ENCODE measurements at regions of chr1 and their contacts with region 1.

Region 1: DNA sequence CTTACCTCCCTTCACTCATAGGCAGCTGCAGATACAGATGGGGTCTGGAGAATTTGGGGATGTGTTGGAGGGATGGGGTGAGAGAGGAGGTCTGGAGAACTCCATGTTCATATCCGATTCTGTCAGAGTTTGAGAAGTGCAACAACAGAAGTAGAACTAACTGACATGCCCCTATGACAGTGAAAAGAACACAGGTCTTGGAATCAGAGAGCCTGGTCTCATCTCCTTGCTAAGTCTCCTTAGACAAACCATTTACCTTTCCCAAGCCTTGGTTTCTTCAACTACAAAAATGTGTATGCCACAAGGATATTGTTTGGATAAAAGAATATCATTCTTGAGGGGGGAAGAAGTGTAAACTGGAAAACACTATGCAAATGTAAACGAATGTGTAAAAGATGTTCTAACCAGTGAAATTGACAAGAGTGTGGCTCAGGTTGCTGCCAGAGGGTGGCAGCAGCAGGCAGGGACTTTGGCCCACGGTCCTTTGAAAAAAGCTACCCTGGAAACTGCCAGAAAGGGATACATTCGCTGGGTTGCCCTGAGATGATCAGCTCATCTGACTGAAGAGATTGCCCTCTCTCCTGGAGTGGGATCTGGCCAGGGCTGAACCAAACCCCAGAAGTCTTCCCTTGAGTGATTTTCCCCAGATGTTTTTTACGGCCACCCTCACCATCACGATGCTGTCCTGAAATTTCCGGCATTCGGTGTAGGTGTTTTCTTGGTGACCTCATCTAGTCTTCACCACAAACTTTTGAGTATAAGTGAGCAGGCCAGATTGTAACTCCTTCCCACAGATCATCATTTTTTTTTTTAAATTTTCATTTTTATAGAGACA is 17.0 kb upstream of the CD2 start:
- DNase-seq: peak; percentile 53 to 81 (median 77)
- H3K4me3 ChIP-seq: peak overlapping the region; percentile 37
- H3K4me3 Mint-ChIP-seq: peak overlapping the region; percentile 66 to 81 (median 79)
- H3K27ac ChIP-seq: peak overlapping the region; percentile 79
- H3K27ac Mint-ChIP-seq: peak overlapping the region; percentile 99 to 100 (median 100)
- H3K4me1 ChIP-seq: peaks cover 42% of the 10 kb centered on the region
- H3K4me1 Mint-ChIP-seq: peaks cover 43 to 47% (median 47%) of the 10 kb centered on the region in 3 donors
- H3K27me3 ChIP-seq: no peaks in the 10 kb centered on the region
- H3K27me3 Mint-ChIP-seq: peaks cover 0 to 1% of the 10 kb centered on the region in 2 donors

Region 2: GRCh38 chr1:116521186-116521585 is 216.1 kb before region 1 on chr1:
- CTCF ChIA-PET with region 1: no interaction called
- POLR2A ChIA-PET with region 1: no interaction called
- DNase-seq: no peak
- H3K4me3 ChIP-seq: no peak overlapping the region
- H3K4me3 Mint-ChIP-seq: no peak overlapping the region
- H3K27ac ChIP-seq: no peak overlapping the region
- H3K27ac Mint-ChIP-seq: peak overlapping the region in 2 of 8 donors; percentile 11 to 70
- H3K4me1 ChIP-seq: peaks cover 1% of the 10 kb centered on the region
- H3K4me1 Mint-ChIP-seq: peaks cover 14 to 23% (median 22%) of the 10 kb centered on the region in 3 donors
- H3K27me3 ChIP-seq: no peaks in the 10 kb centered on the region
- H3K27me3 Mint-ChIP-seq: no peaks in the 10 kb centered on the region

Region 3: DNA sequence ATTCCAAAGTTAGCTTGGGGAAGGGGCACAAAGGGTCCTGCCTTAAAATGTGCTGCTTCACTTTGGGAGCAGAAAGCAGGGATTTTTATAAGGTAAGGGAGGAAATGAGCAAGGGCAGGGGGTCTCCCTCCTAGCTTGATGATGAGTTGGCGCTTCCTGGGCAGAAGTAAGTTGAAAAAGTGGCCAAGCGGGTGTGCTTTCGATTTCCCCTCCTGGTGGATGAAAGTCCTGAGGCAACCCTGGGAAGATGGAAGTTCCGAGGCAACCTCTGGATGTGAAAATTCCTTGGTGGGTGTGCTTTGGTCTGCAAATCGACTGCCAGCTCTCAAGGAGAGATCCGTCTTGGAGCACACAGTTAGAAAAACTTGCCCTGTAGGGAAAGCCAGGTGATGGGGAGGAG is 24.7 kb before region 1 on chr1:
- CTCF ChIA-PET with region 1: no interaction called
- POLR2A ChIA-PET with region 1: no interaction called
- DNase-seq: no peak
- H3K4me3 ChIP-seq: no peak overlapping the region
- H3K4me3 Mint-ChIP-seq: no peak overlapping the region
- H3K27ac ChIP-seq: no peak overlapping the region
- H3K27ac Mint-ChIP-seq: no peak overlapping the region
- H3K4me1 ChIP-seq: no peaks in the 10 kb centered on the region
- H3K4me1 Mint-ChIP-seq: no peaks in the 10 kb centered on the region
- H3K27me3 ChIP-seq: no peaks in the 10 kb centered on the region
- H3K27me3 Mint-ChIP-seq: peaks cover 5 to 34% of the 10 kb centered on the region in 2 donors

Region 4: DNA sequence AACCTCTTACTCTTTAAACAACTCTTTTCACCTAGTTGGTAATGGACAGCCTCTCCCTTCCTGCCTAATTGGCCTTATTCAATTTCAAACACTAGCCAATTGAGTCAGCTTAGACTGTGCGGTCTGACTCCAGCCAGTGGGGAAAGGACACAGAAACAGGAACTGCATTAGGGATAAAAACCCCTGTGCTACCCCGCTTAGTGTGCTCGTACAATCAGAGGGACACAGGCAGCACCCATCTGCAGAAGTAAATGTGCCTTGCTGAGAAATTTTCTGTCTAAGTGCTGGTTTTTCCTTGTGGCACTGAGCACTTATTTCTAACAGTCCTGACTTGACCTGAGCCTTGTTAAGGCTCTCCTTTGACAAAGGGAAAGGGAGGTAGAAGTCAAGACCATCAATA is 11.0 kb after region 1 on chr1:
- CTCF ChIA-PET with region 1: interaction called, 47 read pairs
- POLR2A ChIA-PET with region 1: interaction called, 12 read pairs
- DNase-seq: no peak
- H3K4me3 ChIP-seq: no peak overlapping the region
- H3K4me3 Mint-ChIP-seq: no peak overlapping the region
- H3K27ac ChIP-seq: no peak overlapping the region
- H3K27ac Mint-ChIP-seq: peak overlapping the region in 1 of 8 donors; percentile 7
- H3K4me1 ChIP-seq: peaks cover 22% of the 10 kb centered on the region
- H3K4me1 Mint-ChIP-seq: peaks cover 20 to 31% (median 30%) of the 10 kb centered on the region in 3 donors
- H3K27me3 ChIP-seq: no peaks in the 10 kb centered on the region
- H3K27me3 Mint-ChIP-seq: no peaks in the 10 kb centered on the region

Region 5: DNA sequence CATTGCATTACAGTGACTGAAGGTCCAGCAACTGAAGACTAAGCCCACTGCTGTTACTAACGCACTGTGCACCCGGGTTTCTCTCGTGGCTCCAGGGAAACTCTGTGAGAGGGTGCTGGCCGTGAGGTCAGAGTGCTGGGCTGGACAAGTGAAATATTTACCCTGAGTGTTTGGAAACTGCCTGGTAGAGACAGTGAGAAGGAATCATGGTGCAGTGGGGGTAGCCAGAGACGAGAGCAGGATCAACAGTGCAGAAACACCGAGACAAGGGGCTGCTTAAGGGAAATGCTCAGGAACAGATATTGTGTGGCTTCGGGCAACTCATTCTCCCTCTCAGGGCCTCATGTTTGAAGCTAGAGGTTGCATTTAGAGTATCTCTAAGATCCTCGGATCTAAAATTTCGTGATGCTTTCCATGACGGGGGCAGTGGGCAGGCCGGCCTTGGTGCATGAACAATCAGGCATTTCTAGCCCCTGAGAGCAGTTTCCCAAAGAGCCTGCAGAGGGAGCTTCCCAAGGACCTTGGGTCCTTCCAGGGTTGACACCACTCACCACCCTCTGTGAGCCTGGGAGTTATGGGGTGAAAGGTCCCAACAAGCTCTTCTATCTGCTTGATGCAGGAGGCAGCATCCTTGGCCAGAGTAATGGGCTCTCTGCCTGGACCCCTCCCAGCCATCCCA is 26.7 kb after region 1 on chr1:
- CTCF ChIA-PET with region 1: interaction called, 169 read pairs
- POLR2A ChIA-PET with region 1: interaction called, 42 read pairs
- DNase-seq: peak in 3 of 5 donors; percentile 31 to 65 (median 39)
- H3K4me3 ChIP-seq: peak overlapping the region; percentile 64
- H3K4me3 Mint-ChIP-seq: peak overlapping the region; percentile 80 to 97 (median 89)
- H3K27ac ChIP-seq: peak overlapping the region; percentile 73
- H3K27ac Mint-ChIP-seq: peak overlapping the region; percentile 98 to 100 (median 98)
- H3K4me1 ChIP-seq: peaks cover 99% of the 10 kb centered on the region
- H3K4me1 Mint-ChIP-seq: peaks cover 94 to 100% (median 99%) of the 10 kb centered on the region in 3 donors
- H3K27me3 ChIP-seq: no peaks in the 10 kb centered on the region
- H3K27me3 Mint-ChIP-seq: peaks cover 0 to 1% of the 10 kb centered on the region in 2 donors

Region 6: DNA sequence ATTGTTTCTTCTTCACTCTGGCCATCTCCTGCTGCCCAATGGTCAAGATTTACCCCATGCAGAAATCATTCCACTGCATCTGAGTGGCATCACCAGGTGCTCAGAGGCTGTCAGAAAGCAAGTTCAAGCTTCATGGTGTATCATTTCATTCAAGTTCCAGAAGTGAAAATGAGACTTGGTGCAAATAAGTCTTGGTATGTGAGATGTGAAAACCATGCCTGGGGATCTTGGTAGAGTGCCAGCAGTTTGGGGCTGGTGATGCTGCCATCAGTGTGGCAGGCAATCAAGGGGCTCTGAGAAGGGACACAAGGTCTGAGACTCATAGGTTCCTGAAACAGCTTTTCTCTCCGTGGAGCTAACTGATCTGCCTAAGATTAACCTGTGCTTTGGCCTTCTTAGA is 69.0 kb after region 1 on chr1:
- CTCF ChIA-PET with region 1: interaction called, 25 read pairs
- POLR2A ChIA-PET with region 1: interaction called, 4 read pairs
- DNase-seq: peak in 4 of 5 donors; percentile 28 to 85 (median 54)
- H3K4me3 ChIP-seq: peak overlapping the region; percentile 46
- H3K4me3 Mint-ChIP-seq: peak overlapping the region; percentile 82 to 92 (median 85)
- H3K27ac ChIP-seq: peak overlapping the region; percentile 48
- H3K27ac Mint-ChIP-seq: peak overlapping the region; percentile 94 to 99 (median 96)
- H3K4me1 ChIP-seq: peaks cover 66% of the 10 kb centered on the region
- H3K4me1 Mint-ChIP-seq: peaks cover 82 to 97% (median 95%) of the 10 kb centered on the region in 3 donors
- H3K27me3 ChIP-seq: no peaks in the 10 kb centered on the region
- H3K27me3 Mint-ChIP-seq: no peaks in the 10 kb centered on the region

Region 7: DNA sequence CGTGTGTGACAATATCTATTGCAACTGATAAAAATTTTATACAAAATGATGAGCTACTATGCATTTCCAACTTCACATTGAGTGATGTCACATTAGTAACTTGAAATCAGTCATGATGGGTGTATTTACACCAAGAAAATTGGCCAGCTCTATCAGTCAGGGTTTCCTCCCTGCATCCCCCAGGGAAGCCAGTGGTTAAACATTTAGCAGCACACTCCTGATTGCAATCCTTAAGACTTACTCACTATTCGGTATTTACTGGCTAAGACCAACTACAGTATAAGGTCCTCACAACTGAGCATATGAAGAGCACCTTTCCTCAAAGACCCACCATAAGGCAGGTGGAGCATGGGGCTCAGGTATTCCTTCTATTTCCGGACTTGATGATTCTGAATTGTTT is 131.1 kb after region 1 on chr1:
- CTCF ChIA-PET with region 1: no interaction called
- POLR2A ChIA-PET with region 1: no interaction called
- DNase-seq: no peak
- H3K4me3 ChIP-seq: no peak overlapping the region
- H3K4me3 Mint-ChIP-seq: no peak overlapping the region
- H3K27ac ChIP-seq: no peak overlapping the region
- H3K27ac Mint-ChIP-seq: no peak overlapping the region
- H3K4me1 ChIP-seq: no peaks in the 10 kb centered on the region
- H3K4me1 Mint-ChIP-seq: no peaks in the 10 kb centered on the region
- H3K27me3 ChIP-seq: no peaks in the 10 kb centered on the region
- H3K27me3 Mint-ChIP-seq: peaks cover 9 to 19% of the 10 kb centered on the region in 2 donors

Region 8: DNA sequence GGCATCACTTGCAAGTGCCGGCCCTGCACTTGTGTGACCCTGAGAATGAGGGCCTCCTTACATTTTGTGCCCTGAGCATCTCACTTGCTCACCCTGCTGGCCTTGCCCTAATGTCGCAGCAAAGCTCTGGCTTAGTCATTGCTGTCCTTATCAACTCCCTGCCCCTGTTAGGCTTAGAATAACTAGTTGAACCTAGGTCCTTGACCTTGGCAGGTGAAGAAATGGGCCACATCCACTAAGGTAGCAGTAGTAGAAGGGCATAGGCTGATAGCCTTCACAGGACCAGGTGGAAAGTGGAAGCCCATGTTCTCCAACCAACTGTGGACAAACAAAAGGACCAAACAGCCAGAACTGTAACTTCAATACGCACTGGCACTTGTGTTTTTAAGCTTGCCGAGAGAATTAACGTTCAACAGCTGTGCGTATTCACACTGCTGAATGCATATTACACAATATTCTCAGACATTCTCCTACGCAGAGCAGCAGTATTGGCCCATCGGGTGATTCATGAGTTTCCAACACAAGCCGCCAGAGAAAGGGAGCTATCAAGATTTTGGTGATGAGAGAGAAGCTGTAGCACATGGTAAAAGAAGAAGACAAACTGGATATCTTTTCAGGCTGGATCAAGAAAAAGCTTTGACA is 144.8 kb after region 1 on chr1:
- CTCF ChIA-PET with region 1: interaction called, 15 read pairs
- POLR2A ChIA-PET with region 1: no interaction called
- DNase-seq: no peak
- H3K4me3 ChIP-seq: no peak overlapping the region
- H3K4me3 Mint-ChIP-seq: no peak overlapping the region
- H3K27ac ChIP-seq: peak overlapping the region; percentile 38
- H3K27ac Mint-ChIP-seq: no peak overlapping the region
- H3K4me1 ChIP-seq: peaks cover 25% of the 10 kb centered on the region
- H3K4me1 Mint-ChIP-seq: no peaks in the 10 kb centered on the region
- H3K27me3 ChIP-seq: no peaks in the 10 kb centered on the region
- H3K27me3 Mint-ChIP-seq: peaks cover 0 to 2% of the 10 kb centered on the region in 2 donors